B cell (primary cell): ENCODE measurements at regions of chr1 and their contacts with region 1.

Region 1: DNA sequence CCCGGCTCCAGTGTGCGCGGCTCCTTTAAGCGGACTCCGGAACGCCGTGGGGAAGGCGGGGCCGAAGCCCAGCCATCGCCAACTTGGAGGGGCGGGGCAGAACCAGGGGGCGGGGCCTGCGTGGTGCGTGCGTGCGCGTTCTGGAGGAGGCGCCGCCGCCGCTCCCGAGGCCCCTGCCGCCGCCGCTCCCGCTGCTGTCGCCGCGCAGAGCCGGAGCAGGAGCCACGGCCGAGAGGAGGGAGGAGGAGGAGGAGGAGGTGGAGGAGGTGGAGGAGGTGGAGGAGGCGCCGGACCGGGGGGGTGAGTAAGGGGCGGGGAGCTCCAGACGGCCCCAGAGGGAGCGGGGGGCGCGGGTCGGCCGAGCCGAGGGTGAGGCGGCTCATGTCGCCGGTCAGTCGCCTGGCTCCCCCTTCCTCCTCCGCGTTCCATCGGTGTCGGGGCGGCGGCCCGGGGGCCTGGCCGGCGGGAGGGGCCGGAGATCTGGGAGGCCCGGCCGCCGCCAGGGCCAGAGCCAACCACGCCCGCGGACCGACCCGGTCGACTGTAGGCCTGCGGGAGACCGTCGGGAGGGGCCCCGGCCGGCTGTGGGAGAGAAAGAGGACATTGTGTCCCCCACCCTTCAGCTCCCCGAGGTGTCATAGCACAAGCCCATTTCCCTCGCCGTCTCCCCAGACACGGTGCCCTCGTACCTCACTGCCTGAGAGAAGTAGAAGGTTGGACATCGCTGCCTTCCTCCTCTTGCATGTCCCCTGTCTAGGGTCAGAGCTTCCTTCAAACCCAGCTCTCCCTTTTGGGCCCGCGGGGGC is at the start of gene RAP1A:
- DNase-seq: peak; percentile 91
- ATAC-seq: peak; percentile 79
- H3K4me3 ChIP-seq: peak within 1 kb of the TSS; percentile 63 to 94 (median 78)
- H3K4me3 Mint-ChIP-seq: peak within 1 kb of the TSS; percentile 98
- H3K27ac ChIP-seq: peak within 1 kb of the TSS; percentile 73 to 86
- H3K27ac Mint-ChIP-seq: peak within 1 kb of the TSS; percentile 94
- H3K4me1 ChIP-seq: peaks cover 73 to 79% of the 10 kb centered on the region in 2 donors
- H3K4me1 Mint-ChIP-seq: peaks cover 75% of the 10 kb centered on the region
- H3K27me3 ChIP-seq: no peaks in the 10 kb centered on the region
- H3K27me3 Mint-ChIP-seq: no peaks in the 10 kb centered on the region
- CTCF ChIP-seq: no peak
- total RNA-seq, gene RAP1A: 74.6 and 75.3 TPM in 2 replicates

Region 2: GRCh38 chr1:110872745-110873720 is 746.8 kb before region 1 on chr1 and contains the start of gene CD53:
- CTCF ChIA-PET with region 1: no interaction called
- POLR2A ChIA-PET with region 1: no interaction called
- intact Hi-C with region 1: loop called (anchors 10 kb)
- DNase-seq: peak; percentile 92
- ATAC-seq: peak; percentile 66
- H3K4me3 ChIP-seq: peak within 1 kb of the TSS; percentile 73 to 100 (median 97)
- H3K4me3 Mint-ChIP-seq: peak within 1 kb of the TSS; percentile 99
- H3K27ac ChIP-seq: peak within 1 kb of the TSS; percentile 96 to 99
- H3K27ac Mint-ChIP-seq: peak within 1 kb of the TSS; percentile 99
- H3K4me1 ChIP-seq: peaks cover 60% of the 10 kb centered on the region in 2 donors
- H3K4me1 Mint-ChIP-seq: peaks cover 70% of the 10 kb centered on the region
- H3K27me3 ChIP-seq: no peaks in the 10 kb centered on the region
- H3K27me3 Mint-ChIP-seq: no peaks in the 10 kb centered on the region
- CTCF ChIP-seq: no peak
- total RNA-seq, gene CD53: 490 and 495 TPM in 2 replicates

Region 3: DNA sequence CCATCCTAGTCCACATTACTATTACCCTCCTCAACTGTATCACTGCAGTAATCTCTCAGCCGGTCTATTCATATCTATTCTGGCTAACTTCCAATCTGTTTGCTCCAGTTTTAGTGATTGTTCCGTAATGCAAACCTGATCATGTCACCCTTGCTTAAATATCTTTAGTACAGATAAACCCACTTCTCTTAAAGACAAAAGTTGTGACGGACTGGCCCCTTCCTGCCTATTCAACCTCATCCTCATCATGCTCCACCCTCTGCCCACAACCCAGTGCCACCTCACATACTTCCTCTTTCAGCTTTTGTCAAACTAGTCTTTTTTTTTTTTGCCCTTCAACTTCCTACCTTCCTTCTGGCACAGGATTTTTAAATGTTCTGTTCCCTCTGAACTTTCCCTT is 148.8 kb before region 1 on chr1:
- CTCF ChIA-PET with region 1: no interaction called
- POLR2A ChIA-PET with region 1: interaction called, 4 read pairs
- intact Hi-C with region 1: loop called (anchors 2 kb)
- DNase-seq: peak; percentile 92
- ATAC-seq: peak; percentile 94
- H3K4me3 ChIP-seq: peak overlapping the region in 3 of 5 experiments; percentile 10 to 52 (median 36)
- H3K4me3 Mint-ChIP-seq: no peak overlapping the region
- H3K27ac ChIP-seq: peak overlapping the region; percentile 88 to 92
- H3K27ac Mint-ChIP-seq: no peak overlapping the region
- H3K4me1 ChIP-seq: peaks cover 55% of the 10 kb centered on the region in 2 donors
- H3K4me1 Mint-ChIP-seq: peaks cover 30% of the 10 kb centered on the region
- H3K27me3 ChIP-seq: no peaks in the 10 kb centered on the region
- H3K27me3 Mint-ChIP-seq: no peaks in the 10 kb centered on the region
- CTCF ChIP-seq: no peak

Region 4: DNA sequence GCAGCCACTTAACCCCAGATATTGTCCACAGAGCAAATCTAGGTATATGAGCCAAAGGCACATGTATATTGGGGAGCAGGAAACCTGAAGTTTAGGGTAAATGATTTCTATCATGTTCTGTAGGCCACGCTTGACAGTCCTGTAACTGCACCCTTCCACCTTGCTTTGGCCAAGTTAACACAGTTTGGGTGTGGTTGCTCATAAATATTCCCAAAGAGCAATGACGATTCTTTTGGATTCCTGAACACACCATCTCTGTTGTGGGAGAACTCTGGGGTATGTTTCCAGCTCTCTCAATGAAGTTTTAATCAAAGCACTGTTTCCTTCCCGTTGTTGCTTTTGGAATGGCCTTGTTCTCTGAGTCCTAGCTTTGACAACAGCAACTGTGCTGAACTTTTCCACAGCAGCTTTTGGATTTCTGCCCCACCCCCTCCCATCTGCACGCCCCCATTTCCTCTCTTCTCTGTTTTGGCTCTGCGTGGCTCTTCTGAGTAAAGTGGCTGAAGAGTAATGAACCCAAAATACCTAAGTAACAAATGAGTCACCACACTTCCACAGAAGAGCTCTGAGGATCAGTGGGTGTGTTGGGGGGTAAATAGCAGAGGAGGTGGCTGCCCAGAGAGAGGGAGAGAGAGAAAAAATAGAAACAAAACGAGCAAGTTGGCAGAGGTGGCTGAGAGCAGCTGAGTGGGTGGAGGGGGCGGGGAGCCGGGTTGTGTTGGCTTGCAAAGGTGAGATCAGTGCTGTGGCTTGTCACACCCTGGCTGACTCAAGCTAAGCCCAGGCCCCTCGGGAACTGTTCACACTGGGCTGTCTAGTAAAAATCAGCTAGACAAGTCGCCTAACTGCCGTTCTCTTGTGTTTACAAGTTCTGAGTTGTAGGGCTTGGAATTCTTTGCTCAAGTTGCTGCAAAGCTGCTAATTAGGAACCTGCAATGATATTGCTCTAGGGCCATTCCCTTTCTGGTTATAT is 27.2 kb before region 1 on chr1:
- CTCF ChIA-PET with region 1: interaction called, 19 read pairs
- POLR2A ChIA-PET with region 1: interaction called, 33 read pairs
- intact Hi-C with region 1: loop called (anchors 1 kb)
- DNase-seq: peak; percentile 76
- ATAC-seq: peak; percentile 95
- H3K4me3 ChIP-seq: peak overlapping the region in 2 of 5 experiments; percentile 8 to 44
- H3K4me3 Mint-ChIP-seq: peak overlapping the region; percentile 66
- H3K27ac ChIP-seq: peak overlapping the region; percentile 63 to 70
- H3K27ac Mint-ChIP-seq: peak overlapping the region; percentile 83
- H3K4me1 ChIP-seq: peaks cover 60 to 63% of the 10 kb centered on the region in 2 donors
- H3K4me1 Mint-ChIP-seq: peaks cover 51% of the 10 kb centered on the region
- H3K27me3 ChIP-seq: no peaks in the 10 kb centered on the region
- H3K27me3 Mint-ChIP-seq: no peaks in the 10 kb centered on the region
- CTCF ChIP-seq: no peak

Region 5: GRCh38 chr1:111633736-111634247 is 14.0 kb after region 1 on chr1:
- CTCF ChIA-PET with region 1: no interaction called
- POLR2A ChIA-PET with region 1: interaction called, 8 read pairs
- intact Hi-C with region 1: loop called (anchors 1 kb)
- DNase-seq: no peak
- ATAC-seq: no peak
- H3K4me3 ChIP-seq: no peak overlapping the region
- H3K4me3 Mint-ChIP-seq: no peak overlapping the region
- H3K27ac ChIP-seq: peak overlapping the region in 1 of 2 donors; percentile 37
- H3K27ac Mint-ChIP-seq: no peak overlapping the region
- H3K4me1 ChIP-seq: peaks cover 28 to 53% of the 10 kb centered on the region in 2 donors
- H3K4me1 Mint-ChIP-seq: peaks cover 72% of the 10 kb centered on the region
- H3K27me3 ChIP-seq: no peaks in the 10 kb centered on the region
- H3K27me3 Mint-ChIP-seq: no peaks in the 10 kb centered on the region
- CTCF ChIP-seq: no peak

Region 6: DNA sequence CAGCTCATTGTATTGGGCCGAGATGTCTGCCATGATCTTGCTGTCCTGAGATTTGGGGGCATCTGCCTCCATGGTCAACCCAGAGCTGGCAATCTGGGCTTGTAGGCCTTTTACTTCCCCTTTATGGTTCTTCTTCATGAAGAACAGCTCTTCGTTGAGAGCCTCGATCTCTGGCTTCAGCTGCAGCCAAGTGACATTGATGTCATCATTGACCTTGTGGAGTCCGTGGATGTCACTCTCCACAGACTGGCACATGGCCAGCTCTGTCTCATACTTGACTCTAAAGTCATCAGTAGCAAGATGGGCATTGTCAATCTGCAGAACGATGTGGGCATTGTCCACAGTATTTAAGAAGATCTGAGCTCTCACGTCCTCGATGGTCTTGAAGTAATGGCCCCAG is 29.0 kb after region 1 on chr1:
- CTCF ChIA-PET with region 1: no interaction called
- POLR2A ChIA-PET with region 1: no interaction called
- intact Hi-C with region 1: no loop called
- DNase-seq: no peak
- ATAC-seq: no peak
- H3K4me3 ChIP-seq: no peak overlapping the region
- H3K4me3 Mint-ChIP-seq: no peak overlapping the region
- H3K27ac ChIP-seq: peak overlapping the region in 1 of 2 donors; percentile 36
- H3K27ac Mint-ChIP-seq: no peak overlapping the region
- H3K4me1 ChIP-seq: peaks cover 18 to 24% of the 10 kb centered on the region in 2 donors
- H3K4me1 Mint-ChIP-seq: peaks cover 64% of the 10 kb centered on the region
- H3K27me3 ChIP-seq: no peaks in the 10 kb centered on the region
- H3K27me3 Mint-ChIP-seq: no peaks in the 10 kb centered on the region
- CTCF ChIP-seq: no peak

Region 7: DNA sequence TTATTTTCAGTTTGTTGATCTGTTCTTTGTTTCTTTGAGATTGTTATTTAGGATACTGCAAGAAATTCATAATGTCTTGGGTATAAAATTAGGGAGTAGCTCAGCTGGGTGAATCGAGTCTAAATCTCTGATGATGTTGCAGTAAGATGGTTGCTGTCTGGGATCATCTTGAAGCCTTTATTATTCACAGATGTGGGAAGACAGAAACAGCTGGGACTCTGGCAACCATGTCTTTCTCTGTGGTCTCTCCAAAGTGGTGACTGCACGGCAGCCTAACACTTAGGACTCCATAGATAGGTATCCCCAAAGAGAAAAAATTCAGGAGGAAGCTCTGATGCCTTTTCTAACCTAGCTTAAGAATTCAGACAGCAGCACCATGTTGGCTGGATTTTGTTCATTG is 52.5 kb after region 1 on chr1:
- CTCF ChIA-PET with region 1: no interaction called
- POLR2A ChIA-PET with region 1: no interaction called
- intact Hi-C with region 1: no loop called
- DNase-seq: no peak
- ATAC-seq: no peak
- H3K4me3 ChIP-seq: no peak overlapping the region
- H3K4me3 Mint-ChIP-seq: no peak overlapping the region
- H3K27ac ChIP-seq: peak overlapping the region in 1 of 2 donors; percentile 1
- H3K27ac Mint-ChIP-seq: no peak overlapping the region
- H3K4me1 ChIP-seq: peaks cover 0 to 4% of the 10 kb centered on the region in 2 donors
- H3K4me1 Mint-ChIP-seq: peaks cover 50% of the 10 kb centered on the region
- H3K27me3 ChIP-seq: no peaks in the 10 kb centered on the region
- H3K27me3 Mint-ChIP-seq: no peaks in the 10 kb centered on the region
- CTCF ChIP-seq: no peak

Region 8: GRCh38 chr1:111739194-111739924 is 119.5 kb after region 1 on chr1 and contains the start of gene INKA2:
- CTCF ChIA-PET with region 1: interaction called, 4 read pairs
- POLR2A ChIA-PET with region 1: no interaction called
- intact Hi-C with region 1: loop called (anchors 1 kb)
- DNase-seq: peak; percentile 89
- ATAC-seq: peak; percentile 75
- H3K4me3 ChIP-seq: peak within 1 kb of the TSS; percentile 67 to 81 (median 72)
- H3K4me3 Mint-ChIP-seq: peak within 1 kb of the TSS; percentile 97
- H3K27ac ChIP-seq: peak within 1 kb of the TSS; percentile 60 to 73
- H3K27ac Mint-ChIP-seq: peak within 1 kb of the TSS; percentile 91
- H3K4me1 ChIP-seq: peaks cover 15 to 25% of the 10 kb centered on the region in 2 donors
- H3K4me1 Mint-ChIP-seq: peaks cover 23% of the 10 kb centered on the region
- H3K27me3 ChIP-seq: peaks cover 0 to 39% (median 15%) of the 10 kb centered on the region in 4 experiments
- H3K27me3 Mint-ChIP-seq: peaks cover 6% of the 10 kb centered on the region
- CTCF ChIP-seq: no peak
- total RNA-seq, gene INKA2: 6.4 and 6.5 TPM in 2 replicates